ENCODE measurements at regions of chr17 and their contacts with region 1.

Region 1: DNA sequence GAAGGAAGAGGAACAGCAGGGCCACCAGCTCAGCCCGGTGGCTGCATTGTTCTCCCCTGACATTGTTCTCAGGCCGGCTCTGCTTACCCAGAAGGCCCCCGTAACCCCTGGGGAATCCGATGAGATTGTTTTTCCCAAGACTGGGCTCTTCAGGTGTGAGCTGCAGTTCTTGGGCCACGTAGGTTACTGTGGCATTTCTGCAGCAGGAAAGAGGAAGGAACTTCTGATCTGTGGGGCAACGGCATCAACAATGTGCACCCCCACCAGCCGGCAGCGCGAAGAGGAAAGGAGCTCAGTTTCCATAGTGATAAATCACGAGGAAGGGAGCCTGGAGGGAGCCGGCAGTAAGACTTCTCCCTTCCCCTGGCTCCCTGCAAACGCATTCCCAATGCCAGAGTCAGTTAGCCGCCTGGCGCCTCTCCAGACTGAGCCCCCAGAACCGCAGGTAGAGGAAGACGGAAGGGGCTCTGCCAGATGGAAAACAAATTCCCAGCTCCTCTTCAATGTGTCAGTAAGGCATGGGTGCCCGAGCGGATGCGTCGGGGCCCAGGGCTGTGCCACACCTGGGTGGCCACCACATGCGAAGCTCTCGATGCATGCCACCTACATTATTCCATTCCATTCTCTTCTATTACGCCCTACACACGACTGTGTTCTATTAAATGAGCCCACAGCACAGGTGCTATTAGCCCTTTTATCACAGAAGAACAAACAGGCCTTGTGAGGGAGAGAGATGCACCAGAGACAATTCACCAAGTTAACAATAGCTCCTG is 21.5 kb upstream of the PECAM1 start:
- DNase-seq: no peak
- H3K4me3 ChIP-seq: no peak overlapping the region
- H3K4me3 Mint-ChIP-seq: no peak overlapping the region
- H3K27ac ChIP-seq: no peak overlapping the region
- H3K27ac Mint-ChIP-seq: peak overlapping the region in 2 of 8 donors; percentile 43 to 52
- H3K4me1 ChIP-seq: peaks cover 5% of the 10 kb centered on the region
- H3K4me1 Mint-ChIP-seq: peaks cover 0 to 3% (median 0%) of the 10 kb centered on the region in 3 donors
- H3K27me3 ChIP-seq: no peaks in the 10 kb centered on the region
- H3K27me3 Mint-ChIP-seq: no peaks in the 10 kb centered on the region

Region 2: GRCh38 chr17:64320613-64321553 is 91.3 kb before region 1 on chr17:
- CTCF ChIA-PET with region 1: interaction called, 76 read pairs
- POLR2A ChIA-PET with region 1: interaction called, 4 read pairs
- DNase-seq: peak; percentile 32 to 66 (median 44)
- H3K4me3 ChIP-seq: no peak overlapping the region
- H3K4me3 Mint-ChIP-seq: peak overlapping the region in 3 of 7 donors; percentile 39 to 52 (median 44)
- H3K27ac ChIP-seq: no peak overlapping the region
- H3K27ac Mint-ChIP-seq: peak overlapping the region in 6 of 8 donors; percentile 50 to 85 (median 72)
- H3K4me1 ChIP-seq: peaks cover 10% of the 10 kb centered on the region
- H3K4me1 Mint-ChIP-seq: peaks cover 18 to 33% (median 22%) of the 10 kb centered on the region in 3 donors
- H3K27me3 ChIP-seq: no peaks in the 10 kb centered on the region
- H3K27me3 Mint-ChIP-seq: peaks cover 0 to 5% of the 10 kb centered on the region in 2 donors